PC-3 (cell line): ENCODE measurements at regions of chr13 and their contacts with region 1.

Region 1: DNA sequence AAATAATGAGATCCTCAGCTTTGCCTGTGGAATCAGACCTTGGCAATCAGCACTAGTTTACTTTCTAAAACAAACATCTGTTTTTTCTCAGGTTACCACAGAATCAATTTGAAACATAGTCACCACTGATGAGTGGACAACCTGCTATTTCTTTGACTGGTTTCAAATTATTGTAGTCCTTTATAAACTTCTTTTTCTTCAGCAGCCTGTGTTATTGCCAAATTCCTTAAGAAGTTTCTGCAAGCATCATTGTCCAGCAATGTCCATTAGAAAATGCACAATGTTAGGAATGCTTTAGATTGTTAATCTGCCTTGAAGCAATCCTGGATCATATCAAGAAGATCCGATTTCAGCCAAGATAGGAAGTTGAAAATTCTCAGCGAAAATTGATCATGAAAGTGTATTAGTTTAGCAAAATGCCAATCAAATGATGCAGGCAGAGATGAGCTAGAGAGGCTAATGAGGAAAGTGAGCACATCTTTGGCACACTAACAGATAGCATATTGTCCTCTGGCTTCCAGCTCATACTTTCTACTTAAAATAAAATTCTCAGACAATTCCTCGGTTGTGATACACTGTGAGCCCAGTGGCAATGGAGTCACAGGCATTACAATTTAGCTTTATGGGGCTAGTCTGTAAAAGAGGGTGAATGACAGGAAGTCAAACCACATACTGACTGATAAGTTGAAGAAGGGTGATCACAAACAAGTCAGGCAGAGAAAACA is 270.6 kb downstream of the SLITRK6 start:
- DNase-seq: peak; percentile 81
- ATAC-seq: peak; percentile 82
- H3K4me3 ChIP-seq: peak overlapping the region; percentile 44
- H3K27ac ChIP-seq: peak overlapping the region; percentile 72
- H3K4me1 ChIP-seq: peaks cover 29% of the 10 kb centered on the region
- H3K27me3 ChIP-seq: no peaks in the 10 kb centered on the region
- CTCF ChIP-seq: no peak

Region 2: GRCh38 chr13:85236431-85236830 is 292.2 kb before region 1 on chr13:
- CTCF ChIA-PET with region 1: no interaction called
- POLR2A ChIA-PET with region 1: no interaction called
- intact Hi-C with region 1: loop called (anchors 10 kb)
- DNase-seq: peak; percentile 91
- ATAC-seq: peak; percentile 83
- H3K4me3 ChIP-seq: peak overlapping the region; percentile 60
- H3K27ac ChIP-seq: peak overlapping the region; percentile 47
- H3K4me1 ChIP-seq: peaks cover 25% of the 10 kb centered on the region
- H3K27me3 ChIP-seq: no peaks in the 10 kb centered on the region
- CTCF ChIP-seq: no peak

Region 3: DNA sequence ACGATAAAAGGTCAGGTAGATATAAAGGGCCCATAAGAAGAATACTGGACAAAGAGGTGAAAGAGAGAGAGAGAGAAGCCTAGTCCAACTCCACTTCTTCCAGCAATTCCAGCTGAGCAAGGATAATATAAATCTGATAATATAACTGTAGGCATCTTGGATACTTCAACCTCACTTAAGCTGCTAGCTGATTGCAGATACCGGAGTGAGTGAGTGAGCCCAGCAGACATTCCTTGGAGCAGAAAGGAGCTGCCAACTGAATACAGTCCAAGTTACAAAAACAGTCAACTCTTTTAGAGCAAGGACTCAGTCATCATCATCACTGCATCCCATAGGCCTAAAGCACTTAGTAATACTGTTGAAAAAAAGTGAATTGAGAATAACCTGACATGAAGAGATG is 117.1 kb before region 1 on chr13:
- CTCF ChIA-PET with region 1: no interaction called
- POLR2A ChIA-PET with region 1: no interaction called
- intact Hi-C with region 1: no loop called
- DNase-seq: no peak
- ATAC-seq: no peak
- H3K4me3 ChIP-seq: no peak overlapping the region
- H3K27ac ChIP-seq: no peak overlapping the region
- H3K4me1 ChIP-seq: no peaks in the 10 kb centered on the region
- H3K27me3 ChIP-seq: no peaks in the 10 kb centered on the region
- CTCF ChIP-seq: no peak